ENCODE measurements at regions of chr6 and their contacts with region 1.

Region 1: DNA sequence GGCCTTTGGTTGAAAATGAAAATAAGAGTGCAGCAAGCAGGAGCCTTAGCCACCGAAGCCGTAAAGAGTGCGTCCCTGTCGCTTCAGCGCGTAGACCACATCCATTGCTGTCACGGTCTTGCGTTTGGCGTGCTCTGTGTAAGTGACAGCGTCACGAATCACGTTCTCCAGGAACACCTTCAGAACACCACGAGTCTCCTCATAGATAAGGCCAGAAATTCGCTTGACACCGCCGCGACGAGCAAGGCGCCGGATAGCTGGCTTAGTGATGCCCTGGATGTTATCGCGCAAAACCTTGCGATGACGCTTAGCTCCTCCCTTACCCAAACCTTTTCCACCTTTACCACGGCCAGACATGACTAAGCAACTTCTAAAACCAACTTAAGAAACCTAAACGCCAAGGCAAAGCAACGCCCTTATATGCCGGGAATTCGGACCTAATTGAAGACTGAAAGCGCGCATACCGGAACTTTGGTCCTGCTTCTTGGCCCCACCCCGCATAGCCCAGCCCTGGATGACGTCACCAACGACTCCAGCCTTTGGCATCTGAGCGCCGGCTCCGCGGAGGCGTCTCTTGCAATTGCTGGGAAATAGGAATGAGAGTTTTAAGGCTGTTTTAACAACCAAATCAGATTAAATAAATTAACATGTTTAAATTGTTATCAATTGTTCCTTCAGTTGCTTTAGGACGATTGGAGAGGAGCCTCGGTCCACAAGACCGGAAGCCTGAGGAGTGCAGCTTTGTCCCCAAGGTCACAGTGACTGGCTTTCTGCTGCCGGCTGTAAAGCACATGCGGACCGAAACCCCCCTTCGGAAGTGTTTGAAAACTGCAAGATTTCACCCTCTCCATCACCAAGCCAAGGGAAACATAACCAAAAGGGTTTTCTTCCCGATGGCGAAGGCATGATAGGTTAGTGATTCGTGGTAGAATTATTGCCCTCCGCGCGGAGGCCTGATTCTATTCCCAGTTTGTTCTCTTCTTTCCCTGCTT is 79.6 kb upstream of the BTN3A2 start:
- DNase-seq: peak; percentile 83 to 98
- ATAC-seq: peak; percentile 76 to 93 (median 83)
- H3K4me3 ChIP-seq: peak overlapping the region; percentile 70
- H3K4me3 Mint-ChIP-seq: peak overlapping the region; percentile 95
- H3K27ac ChIP-seq: peak overlapping the region; percentile 97
- H3K27ac Mint-ChIP-seq: peak overlapping the region; percentile 98
- H3K4me1 ChIP-seq: peaks cover 17% of the 10 kb centered on the region
- H3K4me1 Mint-ChIP-seq: peaks cover 34 to 37% of the 10 kb centered on the region in 2 donors
- H3K27me3 ChIP-seq: no peaks in the 10 kb centered on the region
- H3K27me3 Mint-ChIP-seq: peaks cover 3 to 8% of the 10 kb centered on the region in 2 donors
- CTCF ChIP-seq: no peak

Region 2: DNA sequence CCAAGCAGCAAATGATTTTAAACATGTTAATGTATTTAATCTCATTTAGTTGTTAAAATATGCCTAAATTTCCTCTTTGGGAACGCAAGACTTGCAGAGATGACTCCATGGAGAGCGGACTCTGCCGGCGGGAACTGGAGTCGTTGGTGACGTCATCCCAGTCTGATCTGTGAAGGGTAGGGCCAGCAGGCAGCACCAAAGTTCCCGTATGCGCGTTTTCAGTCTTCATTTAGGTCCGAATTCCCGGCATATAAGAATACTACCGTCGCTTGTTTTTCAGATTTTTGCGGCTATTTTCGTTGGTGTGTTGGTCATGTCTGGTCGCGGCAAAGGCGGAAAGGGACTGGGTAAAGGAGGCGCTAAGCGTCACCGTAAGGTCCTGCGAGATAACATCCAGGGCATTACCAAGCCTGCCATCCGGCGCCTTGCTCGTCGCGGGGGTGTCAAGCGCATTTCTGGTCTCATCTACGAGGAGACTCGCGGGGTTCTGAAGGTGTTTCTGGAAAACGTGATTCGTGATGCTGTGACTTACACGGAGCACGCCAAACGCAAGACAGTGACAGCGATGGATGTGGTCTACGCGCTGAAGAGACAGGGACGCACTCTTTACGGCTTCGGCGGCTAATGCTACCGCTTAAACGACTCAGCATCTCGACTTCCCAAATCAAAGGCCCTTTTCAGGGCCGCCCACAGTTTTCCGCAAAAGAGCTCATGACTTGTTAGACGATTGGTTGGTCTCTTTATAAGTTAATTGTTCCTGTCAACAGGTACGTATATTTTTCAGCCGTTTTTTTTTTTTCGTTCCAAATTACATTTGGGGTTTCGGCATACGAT is 80.9 kb before region 1 on chr6:
- intact Hi-C with region 1: loop called (anchors 1 kb)
- DNase-seq: peak; percentile 78 to 97
- ATAC-seq: peak; percentile 63 to 81 (median 69)
- H3K4me3 ChIP-seq: peak overlapping the region; percentile 81
- H3K4me3 Mint-ChIP-seq: no peak overlapping the region
- H3K27ac ChIP-seq: peak overlapping the region; percentile 96
- H3K27ac Mint-ChIP-seq: no peak overlapping the region
- H3K4me1 ChIP-seq: peaks cover 25% of the 10 kb centered on the region
- H3K4me1 Mint-ChIP-seq: peaks cover 13 to 19% of the 10 kb centered on the region in 2 donors
- H3K27me3 ChIP-seq: no peaks in the 10 kb centered on the region
- H3K27me3 Mint-ChIP-seq: no peaks in the 10 kb centered on the region
- CTCF ChIP-seq: peak; percentile 23

Region 3: DNA sequence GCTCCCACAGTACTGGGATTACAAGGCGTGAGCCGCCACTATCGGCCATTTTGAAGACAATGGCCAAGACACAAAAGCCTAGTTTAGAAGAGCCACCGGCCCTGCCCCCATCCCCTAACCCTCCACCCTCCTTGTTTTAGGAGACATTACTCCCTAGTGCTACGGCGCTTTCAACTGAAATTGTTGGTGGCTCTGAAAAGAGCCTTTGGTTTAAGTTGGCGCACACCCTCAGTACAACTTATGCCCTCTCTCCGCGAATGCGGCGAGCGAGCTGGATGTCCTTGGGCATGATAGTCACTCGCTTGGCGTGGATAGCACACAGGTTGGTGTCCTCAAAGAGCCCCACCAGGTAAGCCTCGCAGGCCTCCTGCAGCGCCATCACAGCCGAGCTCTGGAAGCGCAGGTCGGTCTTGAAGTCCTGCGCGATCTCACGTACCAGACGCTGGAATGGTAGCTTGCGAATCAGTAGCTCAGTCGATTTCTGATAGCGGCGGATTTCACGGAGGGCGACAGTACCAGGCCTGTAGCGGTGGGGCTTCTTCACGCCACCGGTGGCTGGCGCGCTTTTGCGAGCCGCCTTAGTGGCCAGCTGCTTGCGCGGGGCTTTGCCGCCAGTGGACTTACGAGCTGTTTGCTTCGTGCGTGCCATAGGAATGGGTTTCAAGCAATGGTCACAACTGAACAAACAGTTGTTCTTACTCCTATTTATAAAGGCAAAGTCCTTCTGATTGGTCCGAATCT is 35.3 kb before region 1 on chr6:
- intact Hi-C with region 1: loop called (anchors 2 kb)
- DNase-seq: peak; percentile 62 to 89
- ATAC-seq: peak; percentile 64 to 79 (median 68)
- H3K4me3 ChIP-seq: peak overlapping the region; percentile 74
- H3K4me3 Mint-ChIP-seq: peak overlapping the region; percentile 98
- H3K27ac ChIP-seq: peak overlapping the region; percentile 70
- H3K27ac Mint-ChIP-seq: peak overlapping the region; percentile 96 to 97
- H3K4me1 ChIP-seq: peaks cover 16% of the 10 kb centered on the region
- H3K4me1 Mint-ChIP-seq: peaks cover 39 to 40% of the 10 kb centered on the region in 2 donors
- H3K27me3 ChIP-seq: no peaks in the 10 kb centered on the region
- H3K27me3 Mint-ChIP-seq: no peaks in the 10 kb centered on the region
- CTCF ChIP-seq: peak; percentile 44

Region 4: DNA sequence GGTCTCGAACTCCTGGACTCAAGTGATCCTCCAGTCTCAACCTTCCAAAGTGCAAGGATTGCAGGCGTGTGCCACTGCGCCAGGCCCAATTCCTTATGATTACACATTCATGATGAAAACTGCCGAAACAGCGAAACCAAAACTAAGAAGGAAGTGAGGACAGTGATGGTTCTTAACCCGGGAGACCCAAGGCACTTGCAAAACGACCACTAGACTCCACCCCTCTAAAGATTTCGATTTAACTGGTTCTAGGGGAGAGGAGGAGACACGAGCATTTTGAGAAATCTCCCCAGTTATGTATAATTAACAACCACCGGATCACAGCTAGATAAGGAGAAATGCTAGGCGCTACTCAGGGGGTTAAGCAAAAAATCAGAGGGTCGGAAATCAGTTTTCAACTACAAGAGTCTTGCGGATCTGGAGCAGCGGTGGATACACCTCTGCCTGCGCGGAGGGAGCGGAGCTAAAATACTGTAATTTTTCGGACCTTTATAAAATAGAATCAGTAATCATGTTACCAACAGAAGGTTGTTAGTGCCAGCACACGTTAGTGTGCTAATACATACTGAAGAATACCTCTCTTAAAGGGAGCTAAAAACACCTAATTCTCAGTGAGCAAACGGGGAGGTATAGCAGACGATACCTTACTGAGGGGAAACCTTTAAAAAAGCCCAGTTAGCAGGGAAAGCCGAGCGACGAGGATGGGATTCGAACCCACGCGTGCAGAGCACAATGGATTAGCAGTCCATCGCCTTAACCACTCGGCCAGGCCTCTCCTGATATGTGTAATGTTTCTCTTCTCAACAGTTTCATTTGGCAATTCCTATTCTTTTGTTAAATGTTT is 19.6 kb after region 1 on chr6:
- intact Hi-C with region 1: loop called (anchors 2 kb)
- DNase-seq: peak; percentile 61 to 80
- ATAC-seq: peak; percentile 72 to 85 (median 78)
- H3K4me3 ChIP-seq: peak overlapping the region; percentile 43
- H3K4me3 Mint-ChIP-seq: peak overlapping the region; percentile 99
- H3K27ac ChIP-seq: peak overlapping the region; percentile 65
- H3K27ac Mint-ChIP-seq: peak overlapping the region; percentile 96 to 100
- H3K4me1 ChIP-seq: peaks cover 31% of the 10 kb centered on the region
- H3K4me1 Mint-ChIP-seq: peaks cover 56 to 62% of the 10 kb centered on the region in 2 donors
- H3K27me3 ChIP-seq: no peaks in the 10 kb centered on the region
- H3K27me3 Mint-ChIP-seq: no peaks in the 10 kb centered on the region
- CTCF ChIP-seq: no peak

Region 5: GRCh38 chr6:26322645-26323482 is 37.4 kb after region 1 on chr6:
- intact Hi-C with region 1: loop called (anchors 5 kb)
- DNase-seq: peak in 1 of 2 donors; percentile 85
- ATAC-seq: peak; percentile 72 to 76 (median 75)
- H3K4me3 ChIP-seq: peak overlapping the region; percentile 47
- H3K4me3 Mint-ChIP-seq: peak overlapping the region; percentile 68
- H3K27ac ChIP-seq: no peak overlapping the region
- H3K27ac Mint-ChIP-seq: peak overlapping the region; percentile 86 to 92
- H3K4me1 ChIP-seq: peaks cover 16% of the 10 kb centered on the region
- H3K4me1 Mint-ChIP-seq: peaks cover 25 to 27% of the 10 kb centered on the region in 2 donors
- H3K27me3 ChIP-seq: peaks cover 15% of the 10 kb centered on the region
- H3K27me3 Mint-ChIP-seq: peaks cover 32 to 38% of the 10 kb centered on the region in 2 donors
- CTCF ChIP-seq: no peak

Measured in natural killer cell (primary cell).